ENCODE measurements at regions of chr2 and their contacts with region 1.

Region 1: DNA sequence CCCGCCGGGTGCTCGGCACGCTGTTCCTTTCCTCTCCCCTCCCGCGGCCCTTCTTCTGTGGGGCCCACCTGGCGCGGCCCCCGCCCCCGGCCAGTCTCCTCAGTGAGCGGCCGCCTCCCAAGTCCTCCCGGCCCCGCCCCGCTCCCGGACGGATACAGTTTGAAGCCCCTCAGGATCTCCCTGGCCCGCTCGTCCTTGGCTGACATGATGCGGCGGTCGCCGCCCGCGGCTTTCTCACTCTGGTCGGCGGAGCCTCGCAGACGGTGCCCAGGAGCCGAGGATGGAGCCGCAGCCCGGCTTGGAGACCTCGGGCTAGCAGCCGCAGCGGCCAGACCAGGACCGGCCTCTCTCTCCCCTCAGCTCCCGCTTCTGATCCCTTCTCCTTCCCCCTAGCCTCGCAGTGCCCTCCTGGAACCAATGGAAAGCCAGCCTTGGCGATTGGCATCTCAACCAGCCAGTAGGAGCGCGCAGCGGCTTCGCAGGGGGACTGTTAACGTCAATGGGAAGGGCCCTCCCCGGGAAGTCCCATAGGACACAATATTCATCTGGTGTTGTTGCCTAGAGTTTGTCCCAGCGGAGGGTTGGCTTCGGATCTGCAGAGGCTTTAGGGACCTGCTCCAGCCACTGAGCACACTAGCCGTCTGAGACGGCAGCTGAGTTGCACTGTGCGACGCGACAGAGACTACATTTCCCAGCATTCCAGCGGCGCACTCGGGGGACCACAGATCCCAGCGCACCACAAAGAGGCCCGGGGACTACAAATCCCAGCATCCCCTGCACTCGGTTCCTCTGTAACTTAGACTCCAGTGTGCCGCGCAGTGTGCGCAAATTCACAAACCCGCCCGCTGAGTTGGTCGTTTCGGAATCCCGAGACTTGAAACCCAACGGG is at the start of gene PDE6D:
- DNase-seq: peak; percentile 97
- ATAC-seq: peak; percentile 93
- H3K4me3 Mint-ChIP-seq: peak within 1 kb of the TSS; percentile 83
- H3K27ac Mint-ChIP-seq: peak within 1 kb of the TSS; percentile 92
- H3K4me1 Mint-ChIP-seq: peaks cover 44% of the 10 kb centered on the region
- H3K27me3 Mint-ChIP-seq: no peaks in the 10 kb centered on the region
- total RNA-seq, gene PDE6D: 28.0 to 31.1 TPM

Region 2: GRCh38 chr2:231503766-231504165 is 277.4 kb before region 1 on chr2:
- CTCF ChIA-PET with region 1: no interaction called
- POLR2A ChIA-PET with region 1: no interaction called
- intact Hi-C with region 1: no loop called
- DNase-seq: no peak
- ATAC-seq: no peak
- H3K4me3 Mint-ChIP-seq: no peak overlapping the region
- H3K27ac Mint-ChIP-seq: no peak overlapping the region
- H3K4me1 Mint-ChIP-seq: no peaks in the 10 kb centered on the region
- H3K27me3 Mint-ChIP-seq: no peaks in the 10 kb centered on the region

Region 3: DNA sequence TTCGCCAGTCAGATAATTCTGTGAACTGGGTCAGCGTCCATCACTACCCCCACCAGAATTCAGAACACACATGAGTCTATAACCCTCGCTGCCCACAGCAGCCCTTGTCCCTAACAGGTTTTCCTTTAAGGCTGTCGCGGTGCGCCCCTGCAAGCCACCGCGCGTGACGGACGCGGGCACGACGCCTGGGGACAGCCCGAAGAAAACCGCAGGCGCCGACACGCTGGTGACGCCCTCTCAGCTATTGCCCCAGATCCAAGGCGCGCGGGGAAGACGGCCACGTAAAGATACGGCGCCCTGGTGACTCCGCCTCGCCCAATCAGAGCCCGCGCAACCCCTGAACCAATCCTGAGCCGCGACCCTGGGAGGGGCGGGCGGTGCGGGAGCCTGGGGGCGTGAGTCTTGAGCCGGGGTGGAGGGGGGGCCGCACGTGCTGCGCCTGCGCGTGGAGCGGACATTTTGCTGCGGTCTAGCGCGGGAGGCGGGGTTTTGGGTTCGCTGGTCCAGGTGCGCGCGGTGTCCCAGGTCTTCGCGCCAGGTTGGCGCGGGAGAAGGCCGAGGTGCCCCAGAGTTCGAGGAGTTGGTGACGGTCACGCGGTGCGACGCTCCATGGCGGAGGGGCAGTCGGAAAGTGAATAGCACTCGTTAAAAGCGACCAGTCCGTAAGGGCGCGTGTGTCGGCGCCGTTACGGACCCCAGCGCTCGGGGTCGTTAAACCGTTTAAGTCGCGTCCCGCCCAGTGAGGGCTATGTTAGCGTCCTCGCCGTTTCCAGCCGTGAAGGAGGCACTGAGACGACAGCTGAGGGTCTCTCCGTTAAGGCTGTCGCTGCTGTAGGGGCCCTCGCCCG is 266.8 kb before region 1 on chr2:
- CTCF ChIA-PET with region 1: no interaction called
- POLR2A ChIA-PET with region 1: no interaction called
- intact Hi-C with region 1: loop called (anchors 1 kb)
- DNase-seq: peak; percentile 99
- ATAC-seq: peak; percentile 99
- H3K4me3 Mint-ChIP-seq: peak overlapping the region; percentile 83
- H3K27ac Mint-ChIP-seq: peak overlapping the region; percentile 95
- H3K4me1 Mint-ChIP-seq: peaks cover 13% of the 10 kb centered on the region
- H3K27me3 Mint-ChIP-seq: no peaks in the 10 kb centered on the region

Region 4: GRCh38 chr2:231674587-231675338 is 106.4 kb before region 1 on chr2:
- CTCF ChIA-PET with region 1: interaction called, 4 read pairs
- POLR2A ChIA-PET with region 1: no interaction called
- intact Hi-C with region 1: loop called in 1 of 2 experiments (anchors 2 kb)
- DNase-seq: peak; percentile 81
- ATAC-seq: peak; percentile 84
- H3K4me3 Mint-ChIP-seq: no peak overlapping the region
- H3K27ac Mint-ChIP-seq: no peak overlapping the region
- H3K4me1 Mint-ChIP-seq: peaks cover 10% of the 10 kb centered on the region
- H3K27me3 Mint-ChIP-seq: no peaks in the 10 kb centered on the region

Region 5: DNA sequence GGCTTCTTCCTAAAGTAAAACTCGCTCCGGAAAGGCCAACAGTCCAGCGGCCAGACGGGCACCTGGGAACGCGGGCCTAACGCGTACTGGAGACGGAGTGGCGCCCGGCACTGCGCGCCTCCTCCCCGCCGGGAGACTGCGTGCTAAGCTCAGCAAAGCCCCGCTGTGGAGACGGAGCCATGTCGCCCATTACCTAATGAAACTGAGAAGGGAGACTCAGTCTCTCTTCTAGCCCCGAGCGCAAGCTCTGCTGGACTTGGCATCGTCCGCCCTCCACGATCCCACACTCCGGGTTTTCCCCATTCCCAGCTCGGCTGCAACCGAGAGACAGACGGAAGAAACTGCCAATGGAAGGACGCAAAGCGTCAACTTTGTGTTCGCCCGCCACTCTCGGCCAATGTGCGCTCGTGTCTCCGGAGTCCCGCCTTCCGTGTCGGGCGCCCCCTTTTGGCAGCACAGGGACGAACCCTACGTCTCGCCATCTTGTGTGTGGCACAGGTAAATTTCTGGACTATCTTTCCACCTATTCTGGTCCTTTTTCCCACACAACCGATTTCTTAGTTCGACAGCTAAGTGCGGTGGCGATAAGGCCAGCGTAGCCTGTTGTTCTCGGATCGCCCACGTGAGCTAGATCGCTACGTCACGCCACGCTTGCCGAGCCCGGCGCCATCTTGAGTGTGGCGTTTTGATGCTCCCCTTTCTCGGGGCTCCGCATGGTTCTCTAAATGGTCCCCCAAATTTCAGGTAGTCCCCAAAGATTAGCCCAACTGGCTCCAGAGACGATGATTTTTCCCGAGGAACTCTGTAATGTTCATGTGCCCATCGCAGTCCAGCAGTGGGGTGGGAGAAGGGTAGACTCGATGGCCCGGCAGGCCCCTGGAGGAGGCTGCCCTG is 74.2 kb before region 1 on chr2:
- CTCF ChIA-PET with region 1: no interaction called
- POLR2A ChIA-PET with region 1: interaction called, 3 read pairs
- intact Hi-C with region 1: loop called (anchors 1 to 2 kb)
- DNase-seq: peak; percentile 99
- ATAC-seq: peak; percentile 59
- H3K4me3 Mint-ChIP-seq: peak overlapping the region; percentile 85
- H3K27ac Mint-ChIP-seq: peak overlapping the region; percentile 100
- H3K4me1 Mint-ChIP-seq: peaks cover 15% of the 10 kb centered on the region
- H3K27me3 Mint-ChIP-seq: peaks cover 2% of the 10 kb centered on the region

Region 6: GRCh38 chr2:231819447-231820042 is 38.4 kb after region 1 on chr2:
- CTCF ChIA-PET with region 1: no interaction called
- POLR2A ChIA-PET with region 1: no interaction called
- intact Hi-C with region 1: no loop called
- DNase-seq: no peak
- ATAC-seq: no peak
- H3K4me3 Mint-ChIP-seq: no peak overlapping the region
- H3K27ac Mint-ChIP-seq: no peak overlapping the region
- H3K4me1 Mint-ChIP-seq: no peaks in the 10 kb centered on the region
- H3K27me3 Mint-ChIP-seq: peaks cover 2% of the 10 kb centered on the region

Region 7: GRCh38 chr2:232315049-232315922 is 534.1 kb after region 1 on chr2:
- CTCF ChIA-PET with region 1: interaction called, 5 read pairs
- POLR2A ChIA-PET with region 1: no interaction called
- intact Hi-C with region 1: loop called in 1 of 2 experiments (anchors 5 kb)
- DNase-seq: peak; percentile 86
- ATAC-seq: peak; percentile 90
- H3K4me3 Mint-ChIP-seq: peak overlapping the region; percentile 42
- H3K27ac Mint-ChIP-seq: peak overlapping the region; percentile 97
- H3K4me1 Mint-ChIP-seq: peaks cover 87% of the 10 kb centered on the region
- H3K27me3 Mint-ChIP-seq: no peaks in the 10 kb centered on the region

Region 8: GRCh38 chr2:232697100-232697865 is 916.1 kb after region 1 on chr2 and contains the start of gene GIGYF2:
- CTCF ChIA-PET with region 1: no interaction called
- POLR2A ChIA-PET with region 1: no interaction called
- intact Hi-C with region 1: loop called in 1 of 2 experiments (anchors 1 kb)
- DNase-seq: peak; percentile 98
- ATAC-seq: peak; percentile 92
- H3K4me3 Mint-ChIP-seq: peak within 1 kb of the TSS; percentile 99
- H3K27ac Mint-ChIP-seq: peak within 1 kb of the TSS; percentile 87
- H3K4me1 Mint-ChIP-seq: peaks cover 36% of the 10 kb centered on the region
- H3K27me3 Mint-ChIP-seq: no peaks in the 10 kb centered on the region
- total RNA-seq, gene GIGYF2: 51.1 to 51.9 TPM

Region 9: DNA sequence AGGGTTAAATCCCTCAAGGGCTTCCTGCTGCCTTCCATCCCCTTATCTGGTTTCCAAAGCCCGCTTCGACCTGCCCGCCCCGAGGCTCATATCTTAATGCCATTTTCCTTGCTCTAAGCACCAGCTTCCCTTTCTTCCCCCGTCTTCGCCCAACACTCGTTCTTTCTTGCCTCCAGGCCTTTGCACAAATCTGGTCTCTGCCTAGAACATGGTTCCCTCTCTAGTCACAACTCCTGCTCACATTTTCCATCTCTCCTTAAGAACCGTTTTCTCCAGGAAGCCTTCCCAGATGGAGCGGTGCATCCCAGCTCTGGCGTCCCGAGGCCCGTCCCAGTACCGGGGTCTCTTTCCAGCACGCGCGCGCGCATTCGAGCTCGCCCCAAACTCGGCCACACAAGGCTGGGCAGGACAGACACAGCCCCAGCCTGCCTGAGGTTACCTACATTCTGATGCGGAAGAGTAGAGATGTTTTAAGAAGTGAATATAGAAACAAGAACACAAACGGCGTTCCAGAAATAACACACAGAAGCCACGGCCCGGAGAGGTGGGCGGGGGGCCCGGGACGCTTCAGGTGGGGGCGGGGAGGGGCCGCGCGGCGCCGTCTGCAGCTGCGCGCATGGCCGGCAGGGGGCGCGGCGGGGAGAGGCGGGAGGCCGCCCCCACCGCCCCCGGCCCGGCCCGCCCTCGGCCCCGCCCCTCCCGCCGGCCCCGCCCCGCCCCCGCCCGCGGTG is 1572.8 kb after region 1 on chr2 and contains the start of gene DGKD:
- CTCF ChIA-PET with region 1: no interaction called
- POLR2A ChIA-PET with region 1: no interaction called
- intact Hi-C with region 1: loop called in 1 of 2 experiments (anchors 5 kb)
- DNase-seq: peak; percentile 88
- ATAC-seq: peak; percentile 62
- H3K4me3 Mint-ChIP-seq: peak within 1 kb of the TSS; percentile 85
- H3K27ac Mint-ChIP-seq: peak within 1 kb of the TSS; percentile 80
- H3K4me1 Mint-ChIP-seq: peaks cover 63% of the 10 kb centered on the region
- H3K27me3 Mint-ChIP-seq: no peaks in the 10 kb centered on the region
- total RNA-seq, gene DGKD: 57.0 to 62.6 TPM

Measured in activated CD4-positive, alpha-beta T cell treated with anti-CD3 and anti-CD28 coated beads for 36 hours (primary cell).